Activated naive CD4-positive, alpha-beta T cell treated with anti-CD3 and anti-CD28 coated beads for 36 hours (primary cell): ENCODE measurements at regions of chr17 and their contacts with region 1.

Region 1: GRCh38 chr17:45060797-45061605 is at the start of gene NMT1:
- DNase-seq: peak; percentile 99
- H3K4me3 Mint-ChIP-seq: peak within 1 kb of the TSS; percentile 87
- H3K27ac Mint-ChIP-seq: peak within 1 kb of the TSS; percentile 93
- H3K4me1 Mint-ChIP-seq: peaks cover 47% of the 10 kb centered on the region
- H3K27me3 Mint-ChIP-seq: no peaks in the 10 kb centered on the region
- total RNA-seq, gene NMT1: 234 to 235 TPM

Region 2: DNA sequence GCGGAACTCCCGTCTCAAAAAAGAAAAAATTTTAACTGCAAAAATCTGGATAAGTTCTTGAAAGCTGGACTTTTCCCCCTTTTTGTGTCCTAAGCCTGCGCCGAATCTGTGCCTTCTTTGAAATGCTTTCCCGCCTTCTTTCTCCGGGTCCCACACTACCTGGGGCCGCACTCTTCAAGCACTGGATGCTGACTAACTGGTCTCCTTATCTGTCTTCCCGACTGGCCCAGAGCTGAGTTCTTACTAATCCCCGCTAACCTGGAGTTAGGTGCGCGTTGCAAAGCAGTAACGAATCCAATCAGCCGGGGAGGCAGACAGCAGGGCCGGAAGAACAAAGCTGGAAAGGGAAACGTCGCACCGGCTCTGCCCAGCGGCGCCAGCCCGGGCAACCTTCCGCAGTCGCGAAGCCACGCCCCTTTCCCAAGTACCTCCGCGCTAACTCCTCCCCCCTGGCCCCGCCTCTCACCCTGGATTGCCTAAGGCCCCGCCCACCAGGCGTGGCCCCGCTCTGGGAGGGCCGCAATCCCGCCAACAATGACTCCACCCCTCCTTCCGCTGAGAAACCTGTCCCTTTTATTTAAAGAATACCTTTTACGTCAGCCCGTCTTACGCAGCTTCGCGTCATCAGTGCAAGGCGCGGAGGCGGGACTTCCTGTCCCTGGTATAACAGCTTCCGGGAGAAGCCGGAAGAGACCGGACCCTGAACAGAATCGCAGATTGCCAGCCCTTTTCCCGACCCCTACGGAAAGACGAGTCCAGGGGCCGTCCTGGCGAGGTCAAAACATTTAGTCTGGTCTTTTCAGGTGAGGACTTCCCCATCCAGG is 874.5 kb before region 1 on chr17 and contains the start of gene TMUB2:
- CTCF ChIA-PET with region 1: no interaction called
- intact Hi-C with region 1: no loop called
- DNase-seq: peak; percentile 100
- H3K4me3 Mint-ChIP-seq: peak within 1 kb of the TSS; percentile 100
- H3K27ac Mint-ChIP-seq: peak within 1 kb of the TSS; percentile 99
- H3K4me1 Mint-ChIP-seq: peaks cover 43% of the 10 kb centered on the region
- H3K27me3 Mint-ChIP-seq: no peaks in the 10 kb centered on the region
- total RNA-seq, gene TMUB2: 21.2 to 22.9 TPM

Region 3: GRCh38 chr17:44899069-44899782 is 161.8 kb before region 1 on chr17 and contains the start of gene EFTUD2:
- CTCF ChIA-PET with region 1: no interaction called
- intact Hi-C with region 1: loop called (anchors 1 kb)
- DNase-seq: peak; percentile 94
- H3K4me3 Mint-ChIP-seq: peak within 1 kb of the TSS; percentile 90
- H3K27ac Mint-ChIP-seq: peak within 1 kb of the TSS; percentile 97
- H3K4me1 Mint-ChIP-seq: peaks cover 25% of the 10 kb centered on the region
- H3K27me3 Mint-ChIP-seq: peaks cover 2% of the 10 kb centered on the region
- total RNA-seq, gene EFTUD2: 170 to 176 TPM

Region 4: DNA sequence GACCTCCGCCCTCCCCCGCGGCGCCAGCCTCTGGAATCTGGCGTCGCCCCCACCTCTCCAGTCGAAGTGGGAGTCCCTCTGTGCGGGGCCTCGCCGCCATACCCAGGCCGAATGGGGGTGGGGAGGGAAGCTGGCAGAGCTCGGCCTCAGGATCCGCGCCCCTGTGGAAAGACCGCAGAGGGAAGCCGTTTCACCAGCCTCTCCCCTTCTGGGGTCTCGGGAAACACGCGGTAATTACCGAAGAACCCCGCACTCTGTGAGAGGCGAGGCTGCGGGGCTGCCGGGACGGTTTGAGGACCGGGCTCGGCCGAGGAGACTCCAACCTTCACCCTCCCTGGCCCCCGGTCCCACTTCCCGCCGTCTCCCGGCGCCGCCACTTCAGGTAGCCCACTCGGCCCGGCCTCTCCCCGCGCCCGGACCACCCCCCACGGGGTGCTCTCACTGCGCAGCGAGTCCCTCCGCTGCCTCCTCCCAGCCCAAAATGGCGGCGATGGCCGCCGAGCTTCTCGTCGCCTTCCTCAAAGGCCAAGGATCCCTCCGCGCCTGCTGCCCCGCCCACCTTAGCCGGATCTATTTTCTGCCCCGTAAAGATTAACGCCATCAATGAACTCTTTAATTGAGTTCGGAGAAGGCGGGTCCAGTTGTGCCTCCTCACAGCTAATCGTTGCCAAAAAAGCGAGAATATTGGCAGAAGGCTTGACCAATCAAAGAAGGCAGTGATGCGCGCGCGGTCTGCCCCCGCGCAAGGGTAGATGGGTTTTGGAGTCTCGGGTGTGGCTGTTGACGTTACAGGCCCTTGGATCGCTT is 100.2 kb after region 1 on chr17:
- CTCF ChIA-PET with region 1: no interaction called
- intact Hi-C with region 1: loop called (anchors 1 kb)
- DNase-seq: peak; percentile 99
- H3K4me3 Mint-ChIP-seq: peak overlapping the region; percentile 96
- H3K27ac Mint-ChIP-seq: peak overlapping the region; percentile 96
- H3K4me1 Mint-ChIP-seq: peaks cover 33% of the 10 kb centered on the region
- H3K27me3 Mint-ChIP-seq: no peaks in the 10 kb centered on the region

Region 5: GRCh38 chr17:45317112-45317928 is 256.3 kb after region 1 on chr17:
- CTCF ChIA-PET with region 1: no interaction called
- intact Hi-C with region 1: loop called (anchors 10 kb)
- DNase-seq: peak; percentile 100
- H3K4me3 Mint-ChIP-seq: peak overlapping the region; percentile 85
- H3K27ac Mint-ChIP-seq: peak overlapping the region; percentile 86
- H3K4me1 Mint-ChIP-seq: peaks cover 67% of the 10 kb centered on the region
- H3K27me3 Mint-ChIP-seq: no peaks in the 10 kb centered on the region